HEK293T (cell line): ENCODE measurements at regions of chr1 and their contacts with region 1.

Region 1: GRCh38 chr1:28914228-28915030 is at the start of gene EPB41:
- DNase-seq: peak; percentile 100

Region 2: GRCh38 chr1:28899267-28899666 is 15.2 kb before region 1 on chr1:
- CTCF ChIA-PET with region 1: no interaction called
- POLR2A ChIA-PET with region 1: interaction called, 12 read pairs
- DNase-seq: no peak

Region 3: DNA sequence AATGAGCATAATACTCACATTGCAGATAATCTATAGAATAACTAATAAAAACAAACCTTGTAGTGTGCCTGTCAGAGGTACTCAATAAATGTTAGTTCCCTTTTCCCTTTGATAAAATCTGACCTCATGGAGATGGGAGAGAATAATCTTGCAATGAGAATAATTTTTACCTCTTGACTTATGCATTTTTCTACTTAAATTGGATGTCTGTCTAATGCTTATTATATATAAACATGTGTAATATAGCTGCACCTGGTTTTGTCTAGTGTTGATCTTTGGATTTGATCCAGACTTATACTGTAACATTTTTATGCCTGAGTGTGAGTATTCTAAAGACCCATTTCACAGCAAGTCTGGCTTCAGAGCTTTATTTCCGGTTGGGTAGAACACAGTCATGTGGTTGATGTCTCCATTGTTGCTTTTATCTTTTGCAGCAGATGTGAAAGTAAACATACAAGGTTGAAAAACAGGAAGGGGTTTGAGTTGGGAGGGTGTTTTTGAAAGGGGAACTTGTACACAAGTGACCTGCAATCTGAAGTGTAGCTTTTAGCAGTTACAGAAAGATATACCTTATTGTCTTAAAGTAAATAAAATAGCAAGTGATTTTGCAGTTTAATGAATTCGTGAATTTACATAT is 12.3 kb after region 1 on chr1:
- CTCF ChIA-PET with region 1: no interaction called
- POLR2A ChIA-PET with region 1: interaction called, 12 read pairs
- DNase-seq: no peak